B cell (primary cell): ENCODE measurements at regions of chr14 and their contacts with region 1.

Region 1: GRCh38 chr14:105161964-105162668 is 6.5 kb downstream of the JAG2 start:
- DNase-seq: no peak
- ATAC-seq: no peak
- H3K4me3 ChIP-seq: no peak overlapping the region
- H3K4me3 Mint-ChIP-seq: no peak overlapping the region
- H3K27ac ChIP-seq: no peak overlapping the region
- H3K27ac Mint-ChIP-seq: no peak overlapping the region
- H3K4me1 ChIP-seq: peaks cover 3 to 10% of the 10 kb centered on the region in 2 donors
- H3K4me1 Mint-ChIP-seq: peaks cover 12% of the 10 kb centered on the region
- H3K27me3 ChIP-seq: peaks cover 0 to 17% (median 6%) of the 10 kb centered on the region in 4 experiments
- H3K27me3 Mint-ChIP-seq: peaks cover 11% of the 10 kb centered on the region
- CTCF ChIP-seq: no peak

Region 2: DNA sequence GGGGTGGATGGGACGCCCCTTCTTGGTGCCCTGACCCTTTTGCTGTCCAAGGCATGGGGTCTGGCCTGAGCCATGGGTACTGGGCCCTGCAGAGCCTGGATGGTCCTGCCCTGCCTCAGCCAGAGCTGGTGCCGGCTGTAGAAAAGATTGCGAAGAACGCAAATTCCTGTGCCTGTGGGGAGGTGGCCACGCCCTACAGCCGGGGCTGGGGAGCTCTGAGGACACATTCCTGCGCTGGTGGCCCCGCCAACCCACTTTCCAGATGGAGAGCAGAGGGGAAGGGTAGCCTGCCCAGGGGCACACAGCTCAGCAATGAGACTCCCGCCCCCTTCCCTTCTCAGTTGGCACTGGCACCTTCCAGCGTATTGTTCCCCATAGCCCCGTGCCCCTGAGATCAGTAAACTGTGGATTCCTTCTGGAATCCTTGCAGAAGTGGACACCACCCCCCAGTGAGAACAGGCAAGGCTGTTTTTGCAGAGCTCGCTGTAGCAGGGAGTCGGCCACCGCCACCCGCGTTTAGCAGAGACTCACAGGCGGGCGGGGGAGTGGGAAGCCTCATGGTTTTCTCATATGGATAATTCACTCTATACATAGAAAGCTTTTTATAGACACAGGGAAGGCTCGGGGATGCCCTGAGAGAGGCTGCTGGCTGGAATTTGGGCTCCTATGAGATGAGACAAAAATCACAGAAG is 464.1 kb before region 1 on chr14:
- CTCF ChIA-PET with region 1: no interaction called
- POLR2A ChIA-PET with region 1: interaction called, 11 read pairs
- intact Hi-C with region 1: no loop called
- DNase-seq: no peak
- ATAC-seq: no peak
- H3K4me3 ChIP-seq: no peak overlapping the region
- H3K4me3 Mint-ChIP-seq: no peak overlapping the region
- H3K27ac ChIP-seq: no peak overlapping the region
- H3K27ac Mint-ChIP-seq: no peak overlapping the region
- H3K4me1 ChIP-seq: peaks cover 14 to 31% of the 10 kb centered on the region in 2 donors
- H3K4me1 Mint-ChIP-seq: peaks cover 30% of the 10 kb centered on the region
- H3K27me3 ChIP-seq: no peaks in the 10 kb centered on the region
- H3K27me3 Mint-ChIP-seq: no peaks in the 10 kb centered on the region
- CTCF ChIP-seq: no peak

Region 3: DNA sequence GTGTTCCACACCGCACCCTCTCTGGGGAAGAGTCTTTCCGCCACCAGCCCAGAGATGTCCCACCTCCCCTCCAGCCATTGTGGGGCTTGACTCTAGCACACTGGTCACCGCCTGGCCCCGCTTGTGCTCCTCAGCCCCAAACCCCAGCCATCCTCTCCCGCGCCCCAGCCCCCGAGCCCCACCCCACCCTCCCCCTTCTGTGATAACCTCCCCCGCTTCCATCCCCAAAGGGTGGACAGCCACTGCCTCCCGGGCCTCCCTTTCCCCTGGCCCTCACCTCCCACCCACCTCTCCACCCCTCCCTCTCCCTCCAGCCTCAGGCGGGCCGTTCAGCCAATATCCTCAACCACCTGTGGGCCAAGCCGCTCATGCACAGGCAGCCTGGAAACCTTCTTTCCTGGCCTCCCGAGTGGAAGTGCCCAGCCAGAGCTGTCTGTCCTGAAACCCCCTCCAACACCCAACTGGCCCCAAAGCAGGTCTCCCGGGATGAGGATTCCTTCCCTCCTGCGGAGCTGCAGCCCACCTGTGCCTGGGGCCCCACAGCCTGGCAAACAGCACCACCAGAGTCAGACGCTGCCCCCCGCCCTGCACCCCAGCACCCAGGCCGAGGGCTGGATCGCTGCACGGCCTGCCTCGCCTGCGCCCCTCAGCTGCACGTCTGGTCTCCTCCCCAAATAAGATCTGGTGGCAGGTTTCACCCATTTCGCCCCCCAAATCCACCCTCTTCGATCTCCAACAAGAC is 46.1 kb after region 1 on chr14:
- CTCF ChIA-PET with region 1: no interaction called
- POLR2A ChIA-PET with region 1: interaction called, 13 read pairs
- intact Hi-C with region 1: no loop called
- DNase-seq: no peak
- ATAC-seq: no peak
- H3K4me3 ChIP-seq: no peak overlapping the region
- H3K4me3 Mint-ChIP-seq: no peak overlapping the region
- H3K27ac ChIP-seq: no peak overlapping the region
- H3K27ac Mint-ChIP-seq: no peak overlapping the region
- H3K4me1 ChIP-seq: peaks cover 3 to 9% of the 10 kb centered on the region in 2 donors
- H3K4me1 Mint-ChIP-seq: peaks cover 9% of the 10 kb centered on the region
- H3K27me3 ChIP-seq: peaks cover 0 to 8% (median 0%) of the 10 kb centered on the region in 4 experiments
- H3K27me3 Mint-ChIP-seq: no peaks in the 10 kb centered on the region
- CTCF ChIP-seq: no peak

Region 4: DNA sequence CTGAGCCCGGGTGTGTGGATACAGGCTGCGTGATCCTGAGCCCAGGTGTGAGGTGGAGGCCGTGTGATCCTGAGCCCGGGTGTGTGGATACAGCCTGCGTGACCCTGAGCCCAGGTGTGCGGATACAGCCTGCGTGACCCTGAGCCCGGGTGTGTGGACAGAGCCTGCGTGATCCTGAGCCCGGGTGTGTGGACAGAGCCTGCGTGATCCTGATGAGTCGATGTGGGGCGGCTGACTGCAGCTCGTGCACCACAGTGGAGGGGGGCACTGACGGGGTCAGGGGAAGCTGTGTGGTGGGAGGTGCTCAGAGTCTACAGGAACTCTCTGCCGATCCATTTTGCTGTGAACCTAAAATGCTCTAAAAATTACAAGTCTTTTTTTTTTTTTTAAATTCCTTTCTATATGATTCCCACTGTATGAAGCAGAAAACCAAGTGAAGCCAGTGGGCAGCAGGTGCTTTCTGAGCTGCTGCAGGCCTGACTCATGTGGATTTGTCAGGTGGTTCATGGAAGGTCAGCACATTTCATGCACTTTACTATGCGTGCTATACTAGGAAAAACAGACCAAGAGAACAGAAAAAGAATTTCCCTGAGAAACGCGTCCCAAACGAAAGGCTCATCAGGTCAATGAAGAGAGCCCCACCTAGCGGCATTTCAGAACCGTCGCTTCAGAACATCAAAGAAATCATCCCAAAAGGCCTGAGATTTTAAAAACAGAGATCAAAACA is 119.4 kb after region 1 on chr14:
- CTCF ChIA-PET with region 1: no interaction called
- POLR2A ChIA-PET with region 1: no interaction called
- intact Hi-C with region 1: no loop called
- DNase-seq: peak; percentile 50
- ATAC-seq: no peak
- H3K4me3 ChIP-seq: no peak overlapping the region
- H3K4me3 Mint-ChIP-seq: no peak overlapping the region
- H3K27ac ChIP-seq: no peak overlapping the region
- H3K27ac Mint-ChIP-seq: no peak overlapping the region
- H3K4me1 ChIP-seq: peaks cover 9 to 15% of the 10 kb centered on the region in 2 donors
- H3K4me1 Mint-ChIP-seq: peaks cover 17% of the 10 kb centered on the region
- H3K27me3 ChIP-seq: no peaks in the 10 kb centered on the region
- H3K27me3 Mint-ChIP-seq: no peaks in the 10 kb centered on the region
- CTCF ChIP-seq: peak; percentile 32